Naive thymus-derived CD4-positive, alpha-beta T cell (primary cell): ENCODE measurements at regions of chr22 and their contacts with region 1.

Region 1: DNA sequence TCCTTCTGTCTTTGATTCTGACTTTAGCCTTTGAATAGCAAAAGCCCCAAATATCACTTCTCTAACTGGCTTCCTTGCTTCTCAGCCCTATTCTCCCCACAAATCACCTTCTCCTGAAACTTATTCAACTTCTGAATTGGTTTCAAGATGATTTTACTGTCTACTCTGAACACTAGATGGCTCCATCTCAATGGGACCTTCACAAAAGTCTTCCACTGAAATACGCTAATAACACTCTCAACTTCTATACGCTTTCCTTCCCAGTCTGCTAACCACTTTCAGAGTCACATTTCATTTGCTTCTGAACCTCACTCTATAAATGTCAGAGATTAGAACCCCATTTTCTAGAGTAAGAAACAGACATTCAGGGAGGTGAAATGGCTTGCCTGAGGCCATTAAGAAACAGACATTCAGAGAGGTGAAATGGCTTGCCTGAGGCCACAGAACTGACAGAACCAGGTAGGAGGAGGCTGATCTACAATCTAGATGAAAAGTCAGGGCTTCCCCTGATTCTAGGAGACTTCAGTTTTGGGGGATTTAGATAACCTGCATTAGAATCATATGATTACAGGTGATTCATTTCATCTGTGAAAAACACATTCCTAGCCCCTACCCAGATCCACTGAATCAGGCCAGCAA is 20.6 kb downstream of the MORC2 start:
- DNase-seq: peak in 7 of 9 donors; percentile 29 to 67 (median 52)
- ATAC-seq: peak; percentile 72
- H3K4me3 ChIP-seq: no peak overlapping the region
- H3K4me3 Mint-ChIP-seq: no peak overlapping the region
- H3K27ac ChIP-seq: peak overlapping the region; percentile 4
- H3K27ac Mint-ChIP-seq: no peak overlapping the region
- H3K4me1 ChIP-seq: peaks cover 11 to 63% of the 10 kb centered on the region in 2 donors
- H3K4me1 Mint-ChIP-seq: peaks cover 52 to 72% (median 65%) of the 10 kb centered on the region in 7 donors
- H3K27me3 ChIP-seq: no peaks in the 10 kb centered on the region
- H3K27me3 Mint-ChIP-seq: no peaks in the 10 kb centered on the region

Region 2: GRCh38 chr22:30985561-30986208 is 37.8 kb after region 1 on chr22:
- CTCF ChIA-PET with region 1: no interaction called
- POLR2A ChIA-PET with region 1: no interaction called
- intact Hi-C with region 1: no loop called
- DNase-seq: no peak
- ATAC-seq: no peak
- H3K4me3 ChIP-seq: no peak overlapping the region
- H3K4me3 Mint-ChIP-seq: no peak overlapping the region
- H3K27ac ChIP-seq: no peak overlapping the region
- H3K27ac Mint-ChIP-seq: no peak overlapping the region
- H3K4me1 ChIP-seq: no peaks in the 10 kb centered on the region
- H3K4me1 Mint-ChIP-seq: peaks cover 0 to 3% (median 0%) of the 10 kb centered on the region in 7 donors
- H3K27me3 ChIP-seq: no peaks in the 10 kb centered on the region
- H3K27me3 Mint-ChIP-seq: peaks cover 0 to 6% (median 0%) of the 10 kb centered on the region in 5 donors

Region 3: GRCh38 chr22:31005535-31005934 is 57.6 kb after region 1 on chr22:
- CTCF ChIA-PET with region 1: no interaction called
- POLR2A ChIA-PET with region 1: no interaction called
- intact Hi-C with region 1: no loop called
- DNase-seq: no peak
- ATAC-seq: no peak
- H3K4me3 ChIP-seq: no peak overlapping the region
- H3K4me3 Mint-ChIP-seq: no peak overlapping the region
- H3K27ac ChIP-seq: no peak overlapping the region
- H3K27ac Mint-ChIP-seq: no peak overlapping the region
- H3K4me1 ChIP-seq: no peaks in the 10 kb centered on the region
- H3K4me1 Mint-ChIP-seq: no peaks in the 10 kb centered on the region
- H3K27me3 ChIP-seq: no peaks in the 10 kb centered on the region
- H3K27me3 Mint-ChIP-seq: peaks cover 0 to 8% (median 2%) of the 10 kb centered on the region in 5 donors

Region 4: DNA sequence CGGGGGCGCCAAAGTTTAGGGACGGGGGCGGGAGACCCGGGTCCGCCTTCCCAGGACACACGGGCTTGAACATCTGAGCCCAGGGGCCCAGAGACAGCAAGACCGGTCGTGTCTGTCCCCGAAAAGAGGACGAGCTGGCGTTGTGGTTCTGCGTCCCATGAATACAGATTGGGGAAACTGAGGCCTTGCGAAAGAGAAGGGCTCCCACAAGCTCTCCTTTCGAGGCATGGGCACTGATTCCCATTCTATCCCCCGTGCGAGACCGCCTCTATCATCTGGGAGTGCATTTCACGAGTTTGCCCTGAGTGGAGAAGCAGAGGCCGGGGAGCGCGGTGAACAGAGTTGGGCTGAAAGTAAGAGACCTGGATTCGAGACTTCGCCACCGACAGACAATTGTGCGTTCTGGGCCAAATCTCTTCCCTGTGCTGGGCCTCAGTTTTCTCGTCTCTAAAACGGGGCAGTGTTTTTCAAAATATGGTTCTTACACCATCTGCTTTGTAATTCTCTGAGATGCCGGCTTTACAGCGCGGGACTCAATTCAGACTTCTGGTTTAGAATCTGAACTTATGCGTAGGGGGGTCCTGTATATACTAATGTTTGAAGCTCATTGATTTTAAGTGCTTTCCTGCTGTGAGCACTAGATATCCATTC is 212.5 kb after region 1 on chr22:
- CTCF ChIA-PET with region 1: no interaction called
- POLR2A ChIA-PET with region 1: no interaction called
- intact Hi-C with region 1: loop called in 1 of 2 experiments (anchors 5 kb)
- DNase-seq: peak in 3 of 9 donors; percentile 5 to 26 (median 9)
- ATAC-seq: peak; percentile 47
- H3K4me3 ChIP-seq: peak overlapping the region; percentile 76
- H3K4me3 Mint-ChIP-seq: peak overlapping the region; percentile 87 to 100 (median 99)
- H3K27ac ChIP-seq: peak overlapping the region; percentile 74
- H3K27ac Mint-ChIP-seq: peak overlapping the region; percentile 91 to 100 (median 97)
- H3K4me1 ChIP-seq: peaks cover 12 to 17% of the 10 kb centered on the region in 2 donors
- H3K4me1 Mint-ChIP-seq: peaks cover 25 to 42% (median 35%) of the 10 kb centered on the region in 7 donors
- H3K27me3 ChIP-seq: no peaks in the 10 kb centered on the region
- H3K27me3 Mint-ChIP-seq: peaks cover 0 to 13% (median 0%) of the 10 kb centered on the region in 5 donors

Region 5: GRCh38 chr22:31300896-31301295 is 353.0 kb after region 1 on chr22:
- CTCF ChIA-PET with region 1: no interaction called
- POLR2A ChIA-PET with region 1: no interaction called
- intact Hi-C with region 1: no loop called
- DNase-seq: no peak
- ATAC-seq: no peak
- H3K4me3 ChIP-seq: no peak overlapping the region
- H3K4me3 Mint-ChIP-seq: peak overlapping the region in 4 of 10 donors; percentile 2 to 22 (median 6)
- H3K27ac ChIP-seq: no peak overlapping the region
- H3K27ac Mint-ChIP-seq: peak overlapping the region in 1 of 9 donors; percentile 11
- H3K4me1 ChIP-seq: peaks cover 8 to 21% of the 10 kb centered on the region in 2 donors
- H3K4me1 Mint-ChIP-seq: peaks cover 17 to 73% (median 51%) of the 10 kb centered on the region in 7 donors
- H3K27me3 ChIP-seq: no peaks in the 10 kb centered on the region
- H3K27me3 Mint-ChIP-seq: peaks cover 0 to 3% (median 0%) of the 10 kb centered on the region in 5 donors